ENCODE measurements at regions of chr2 and their contacts with region 1.

Region 1: DNA sequence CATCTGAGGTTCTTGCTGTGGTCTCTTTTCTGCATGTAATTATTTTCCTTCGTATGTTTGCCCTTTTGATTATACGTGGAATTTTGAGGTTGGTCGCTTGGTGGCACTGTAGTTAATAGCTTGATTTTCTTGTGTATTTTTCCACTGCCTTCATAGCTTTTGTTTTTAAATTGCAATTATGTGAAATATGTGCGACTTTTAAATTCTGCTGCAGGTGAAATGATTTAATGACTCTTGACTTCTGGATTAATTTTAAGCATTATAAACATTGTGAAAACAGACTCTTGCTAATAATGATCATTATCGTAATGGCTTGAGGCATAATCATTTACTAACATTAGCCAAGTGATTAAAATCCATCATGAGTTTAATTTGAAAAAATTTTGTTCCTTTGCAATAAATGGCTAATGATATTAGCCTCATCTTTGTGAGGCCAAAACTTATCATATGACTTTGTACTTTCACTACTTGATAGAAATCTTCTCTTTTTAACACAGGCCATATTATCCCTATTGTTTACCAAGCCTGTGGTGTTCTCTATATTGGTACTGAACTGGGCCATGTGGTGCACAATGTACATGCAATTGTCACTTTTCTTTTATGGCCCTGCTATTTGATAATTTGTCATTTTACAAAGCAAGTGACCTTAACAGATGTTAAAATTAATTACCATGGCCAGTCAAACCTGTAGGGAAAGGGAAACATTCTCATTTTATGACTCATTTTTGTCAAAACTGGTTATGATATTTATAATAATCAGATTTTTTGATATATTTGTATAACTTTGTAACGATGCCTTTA is 62.8 kb upstream of the NEUROD1 start:
- DNase-seq: peak; percentile 74
- ATAC-seq: peak; percentile 47
- H3K4me3 ChIP-seq: 0 out of 2 replicates have a peak overlapping the region, but pooled peaks have one; percentile 18
- H3K27ac ChIP-seq: peak overlapping the region; percentile 69
- H3K4me1 ChIP-seq: peaks cover 29% of the 10 kb centered on the region
- H3K27me3 ChIP-seq: no peaks in the 10 kb centered on the region
- CTCF ChIP-seq: peak; percentile 89

Region 2: GRCh38 chr2:181790716-181791649 is 47.9 kb after region 1 on chr2:
- CTCF ChIA-PET with region 1: no interaction called
- POLR2A ChIA-PET with region 1: no interaction called
- intact Hi-C with region 1: loop called (anchors 2 kb)
- DNase-seq: peak; percentile 95
- ATAC-seq: peak; percentile 96
- H3K4me3 ChIP-seq: 0 out of 2 replicates have a peak overlapping the region, but pooled peaks have one; percentile 2
- H3K27ac ChIP-seq: peak overlapping the region; percentile 96
- H3K4me1 ChIP-seq: peaks cover 57% of the 10 kb centered on the region
- H3K27me3 ChIP-seq: no peaks in the 10 kb centered on the region
- CTCF ChIP-seq: no peak

Region 3: DNA sequence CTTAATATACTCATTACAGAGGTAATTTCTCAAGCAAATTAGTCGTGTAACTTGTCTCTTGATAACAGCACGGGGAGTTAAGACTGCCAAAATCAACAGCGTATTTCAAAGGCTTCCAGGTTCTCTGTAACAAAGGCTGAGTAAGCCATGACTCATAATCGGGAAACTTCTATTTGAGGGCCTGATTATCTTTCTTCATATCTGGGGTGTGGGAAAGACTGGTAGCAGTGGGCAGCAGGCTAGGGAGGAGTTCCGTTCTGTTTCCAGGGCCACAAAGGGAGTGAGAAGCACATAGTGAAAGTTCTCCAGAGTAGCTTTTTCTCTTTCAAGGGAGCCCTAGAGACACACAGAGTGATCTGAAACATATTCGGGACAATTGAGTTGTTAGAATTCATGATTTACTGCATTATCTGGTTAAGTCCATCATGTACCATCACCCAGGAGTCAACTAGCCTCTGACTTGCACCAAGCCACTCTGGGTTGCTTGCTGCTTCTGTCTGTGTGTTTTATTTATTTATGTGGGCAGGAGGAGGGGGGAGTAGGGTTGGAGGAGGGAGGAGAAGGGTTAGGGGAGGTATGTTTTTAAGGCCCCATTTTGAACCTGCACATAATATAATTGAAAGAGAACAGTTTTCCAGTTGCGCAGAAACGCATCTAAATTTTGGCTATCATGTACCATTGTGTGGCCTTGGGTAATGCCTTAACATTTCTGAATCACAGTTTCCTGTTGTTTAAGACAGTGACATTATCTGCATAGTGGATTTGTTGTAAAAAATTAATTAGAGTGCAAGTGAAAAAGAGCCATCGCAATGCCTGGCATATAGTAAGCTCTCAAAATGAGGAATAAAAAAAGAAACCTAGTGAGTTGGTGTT is 67.9 kb after region 1 on chr2:
- CTCF ChIA-PET with region 1: interaction called, 6 read pairs
- POLR2A ChIA-PET with region 1: no interaction called
- intact Hi-C with region 1: loop called (anchors 1 kb)
- DNase-seq: peak; percentile 97
- ATAC-seq: peak; percentile 95
- H3K4me3 ChIP-seq: 0 out of 2 replicates have a peak overlapping the region, but pooled peaks have one; percentile 26
- H3K27ac ChIP-seq: peak overlapping the region; percentile 94
- H3K4me1 ChIP-seq: peaks cover 38% of the 10 kb centered on the region
- H3K27me3 ChIP-seq: no peaks in the 10 kb centered on the region
- CTCF ChIP-seq: no peak

Region 4: DNA sequence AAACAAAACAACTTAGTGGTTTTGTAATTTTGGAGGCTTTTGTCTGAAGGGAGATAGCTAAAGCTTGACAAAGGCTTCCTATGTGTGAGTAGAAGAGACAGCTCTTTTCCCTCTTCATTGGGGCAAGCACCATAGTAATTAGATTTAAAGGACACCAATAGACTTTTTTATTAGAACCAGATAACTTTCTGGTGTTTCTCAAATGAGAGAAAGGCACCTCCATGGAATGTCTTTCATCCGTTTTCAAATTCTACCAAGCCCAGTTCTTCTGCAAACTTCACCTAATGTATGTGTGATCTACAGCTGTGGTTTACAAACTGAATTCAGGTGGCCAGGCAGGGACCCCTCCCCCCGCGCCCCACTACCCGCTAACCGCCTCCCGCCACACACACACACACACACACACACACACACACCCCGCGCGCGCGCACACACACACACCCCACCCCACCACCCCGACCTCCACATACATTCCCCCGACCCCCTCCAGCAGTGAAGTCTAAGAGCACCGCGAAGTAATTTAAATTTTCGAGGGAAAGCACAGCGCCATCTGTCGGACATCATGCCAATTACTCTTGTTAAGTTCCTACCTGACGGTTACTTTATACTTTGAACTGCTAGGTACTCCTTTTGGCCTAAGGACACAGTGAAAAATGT is 210.9 kb after region 1 on chr2:
- CTCF ChIA-PET with region 1: no interaction called
- POLR2A ChIA-PET with region 1: interaction called, 3 read pairs
- intact Hi-C with region 1: loop called (anchors 2 kb)
- DNase-seq: peak; percentile 83
- ATAC-seq: peak; percentile 42
- H3K4me3 ChIP-seq: peak overlapping the region; percentile 45
- H3K27ac ChIP-seq: peak overlapping the region; percentile 57
- H3K4me1 ChIP-seq: peaks cover 35% of the 10 kb centered on the region
- H3K27me3 ChIP-seq: no peaks in the 10 kb centered on the region
- CTCF ChIP-seq: peak; percentile 79

Region 5: GRCh38 chr2:182132605-182133004 is 389.5 kb after region 1 on chr2:
- CTCF ChIA-PET with region 1: no interaction called
- POLR2A ChIA-PET with region 1: no interaction called
- intact Hi-C with region 1: loop called (anchors 2 kb)
- DNase-seq: peak; percentile 29
- ATAC-seq: peak; percentile 71
- H3K4me3 ChIP-seq: no peak overlapping the region
- H3K27ac ChIP-seq: no peak overlapping the region
- H3K4me1 ChIP-seq: peaks cover 11% of the 10 kb centered on the region
- H3K27me3 ChIP-seq: no peaks in the 10 kb centered on the region
- CTCF ChIP-seq: peak; percentile 54

Measured in PC-3 (cell line).